Activated CD8-positive, alpha-beta T cell treated with anti-CD3 and anti-CD28 coated beads for 36 hours (primary cell): ENCODE measurements at regions of chr14 and their contacts with region 1.

Region 1: GRCh38 chr14:94180655-94181271 is 6.6 kb downstream of the PPP4R4 start:
- DNase-seq: no peak
- ATAC-seq: peak; percentile 81
- H3K4me3 Mint-ChIP-seq: peak overlapping the region; percentile 47
- H3K27ac Mint-ChIP-seq: peak overlapping the region; percentile 5
- H3K4me1 Mint-ChIP-seq: peaks cover 13% of the 10 kb centered on the region
- H3K27me3 Mint-ChIP-seq: peaks cover 19% of the 10 kb centered on the region
- CTCF ChIP-seq: peak; percentile 73

Region 2: GRCh38 chr14:94110552-94111181 is 70.1 kb before region 1 on chr14 and contains the start of gene IFI27:
- CTCF ChIA-PET with region 1: no interaction called
- POLR2A ChIA-PET with region 1: no interaction called
- intact Hi-C with region 1: no loop called
- DNase-seq: no peak
- ATAC-seq: no peak
- H3K4me3 Mint-ChIP-seq: no peak within 1 kb of the TSS
- H3K27ac Mint-ChIP-seq: no peak within 1 kb of the TSS
- H3K4me1 Mint-ChIP-seq: no peaks in the 10 kb centered on the region
- H3K27me3 Mint-ChIP-seq: no peaks in the 10 kb centered on the region
- CTCF ChIP-seq: no peak
- total RNA-seq, gene IFI27: 0.86 to 4.1 TPM

Region 3: DNA sequence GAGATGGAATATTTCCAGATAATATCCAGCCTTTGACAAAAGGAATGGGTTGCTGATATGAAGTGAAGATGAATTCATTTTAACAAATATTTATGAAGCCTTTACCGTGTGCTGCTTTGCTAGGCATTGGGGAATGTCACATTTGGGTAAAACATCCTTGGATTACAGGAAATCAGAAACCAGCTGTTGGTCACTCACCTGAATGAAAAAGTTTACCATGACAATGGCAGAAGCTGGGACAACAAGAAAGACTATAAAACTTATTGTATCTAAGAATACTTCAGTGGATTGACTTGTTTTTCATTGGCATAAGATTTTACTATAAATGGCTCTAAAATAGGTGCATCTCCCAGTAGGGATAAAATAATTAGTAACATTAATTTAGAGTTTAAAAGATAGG is 13.0 kb after region 1 on chr14:
- CTCF ChIA-PET with region 1: interaction called, 16 read pairs
- POLR2A ChIA-PET with region 1: no interaction called
- intact Hi-C with region 1: no loop called
- DNase-seq: no peak
- ATAC-seq: no peak
- H3K4me3 Mint-ChIP-seq: no peak overlapping the region
- H3K27ac Mint-ChIP-seq: no peak overlapping the region
- H3K4me1 Mint-ChIP-seq: no peaks in the 10 kb centered on the region
- H3K27me3 Mint-ChIP-seq: peaks cover 31% of the 10 kb centered on the region
- CTCF ChIP-seq: no peak